Activated CD4-positive, alpha-beta T cell treated with anti-CD3 and anti-CD28 coated beads, Interleukin-2, amount 10 ng/mL, durations not matched to agents 24 days and 14 days (primary cell): ENCODE measurements at regions of chr4 and their contacts with region 1.

Region 1: DNA sequence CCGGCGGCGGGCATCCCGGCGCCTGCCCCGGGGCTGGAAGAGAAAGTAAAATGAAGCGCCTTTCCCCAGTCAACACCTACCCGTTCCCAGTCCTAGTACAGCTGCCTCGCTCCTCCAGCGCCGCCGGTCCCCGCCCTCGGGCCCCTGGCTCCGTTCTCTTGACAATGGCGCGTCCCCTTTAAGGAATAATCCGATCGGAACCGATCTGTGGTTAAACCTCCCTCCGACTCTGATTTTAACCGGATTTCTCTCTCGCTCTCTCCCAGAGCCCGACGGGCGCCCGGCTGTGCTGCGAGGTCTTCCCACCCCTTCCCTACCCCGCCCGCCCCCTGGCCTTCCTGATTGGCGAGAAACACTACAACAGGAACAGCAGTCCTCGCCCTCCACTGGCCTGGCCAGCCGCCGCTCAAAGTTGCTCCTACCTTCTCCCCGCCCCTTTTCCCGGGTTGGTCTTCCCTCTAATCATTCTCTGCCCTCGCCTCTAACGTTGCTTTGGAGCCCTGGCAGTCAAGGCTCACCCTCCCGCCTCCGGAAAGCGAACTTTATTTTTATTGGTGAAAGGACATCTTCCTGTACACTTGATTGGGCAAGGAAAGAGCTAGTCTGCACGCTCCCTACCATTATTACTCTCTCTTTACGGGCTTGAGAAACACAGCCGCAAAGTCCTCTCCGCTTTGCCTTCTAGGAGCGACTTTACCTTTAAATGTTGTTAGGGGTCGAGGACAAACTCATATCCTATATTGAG is at the start of gene FRYL:
- DNase-seq: peak; percentile 99
- H3K4me3 Mint-ChIP-seq: peak within 1 kb of the TSS; percentile 91
- H3K27ac Mint-ChIP-seq: peak within 1 kb of the TSS; percentile 96
- H3K4me1 Mint-ChIP-seq: peaks cover 38% of the 10 kb centered on the region
- H3K27me3 Mint-ChIP-seq: no peaks in the 10 kb centered on the region
- total RNA-seq, gene FRYL: 62.0 and 66.0 TPM in 2 replicates

Region 2: GRCh38 chr4:48340965-48341775 is 439.0 kb before region 1 on chr4 and contains the start of gene SLAIN2:
- intact Hi-C with region 1: loop called (anchors 1 kb)
- DNase-seq: peak; percentile 100
- H3K4me3 Mint-ChIP-seq: peak within 1 kb of the TSS; percentile 100
- H3K27ac Mint-ChIP-seq: peak within 1 kb of the TSS; percentile 98
- H3K4me1 Mint-ChIP-seq: peaks cover 55% of the 10 kb centered on the region
- H3K27me3 Mint-ChIP-seq: no peaks in the 10 kb centered on the region
- total RNA-seq, gene SLAIN2: 77.6 and 80.2 TPM in 2 replicates

Region 3: DNA sequence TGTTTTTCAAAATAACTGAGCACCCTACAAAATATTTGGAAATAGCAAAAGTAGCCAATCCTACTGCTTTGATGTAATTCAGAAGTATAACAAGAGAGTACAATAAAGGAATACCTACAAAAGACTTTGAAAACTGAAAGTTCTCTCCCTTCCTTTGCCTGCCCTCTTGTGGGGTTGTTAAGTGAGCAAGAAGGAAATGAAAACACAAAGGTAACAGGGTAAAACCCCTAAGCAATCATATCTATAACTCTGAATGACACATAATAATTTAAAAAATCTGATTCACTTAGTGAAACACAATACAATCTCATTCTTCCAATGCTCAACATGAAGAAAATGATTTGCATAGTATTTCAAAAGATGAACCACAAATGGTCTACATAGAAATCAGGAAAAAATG is 98.3 kb before region 1 on chr4:
- intact Hi-C with region 1: loop called (anchors 1 kb)
- DNase-seq: peak; percentile 68
- H3K4me3 Mint-ChIP-seq: no peak overlapping the region
- H3K27ac Mint-ChIP-seq: peak overlapping the region; percentile 42
- H3K4me1 Mint-ChIP-seq: peaks cover 24% of the 10 kb centered on the region
- H3K27me3 Mint-ChIP-seq: no peaks in the 10 kb centered on the region

Region 4: DNA sequence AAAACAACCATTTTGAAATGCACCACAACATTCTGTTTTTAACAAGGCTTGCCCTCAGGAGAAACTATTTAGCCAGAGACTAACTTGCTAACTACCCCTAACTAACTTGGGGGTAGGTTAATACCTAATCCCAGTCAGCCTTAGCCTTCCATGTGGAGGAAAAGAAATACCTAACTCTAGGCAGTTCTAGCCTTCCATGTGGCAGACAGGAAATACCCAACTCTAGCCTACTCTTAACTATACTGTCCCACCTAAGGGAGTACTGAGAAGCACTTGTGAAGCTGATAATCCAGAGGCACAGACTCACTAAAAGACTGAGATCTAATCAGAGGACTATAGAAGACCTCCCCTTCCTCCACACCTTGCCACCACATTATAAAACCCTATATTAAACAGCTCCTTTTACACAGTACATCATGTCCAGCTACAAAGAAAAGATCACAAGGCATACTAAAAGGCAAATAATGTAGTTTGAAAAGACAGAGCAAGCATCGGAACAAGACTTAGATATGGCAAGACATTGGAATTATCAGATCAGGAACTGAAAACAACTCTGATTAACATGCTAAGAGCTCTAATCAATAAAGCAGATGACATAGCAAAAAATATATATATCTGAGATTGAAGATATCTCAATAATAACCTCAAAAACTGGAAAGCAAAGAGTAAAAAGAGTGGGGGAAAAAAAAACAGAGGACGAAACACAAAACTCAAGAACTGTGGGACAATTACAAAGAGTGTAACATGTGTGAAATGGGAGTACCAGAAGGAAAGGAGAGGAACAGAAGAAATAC is 52.3 kb before region 1 on chr4:
- intact Hi-C with region 1: loop called (anchors 5 kb)
- DNase-seq: no peak
- H3K4me3 Mint-ChIP-seq: no peak overlapping the region
- H3K27ac Mint-ChIP-seq: no peak overlapping the region
- H3K4me1 Mint-ChIP-seq: peaks cover 68% of the 10 kb centered on the region
- H3K27me3 Mint-ChIP-seq: no peaks in the 10 kb centered on the region

Region 5: DNA sequence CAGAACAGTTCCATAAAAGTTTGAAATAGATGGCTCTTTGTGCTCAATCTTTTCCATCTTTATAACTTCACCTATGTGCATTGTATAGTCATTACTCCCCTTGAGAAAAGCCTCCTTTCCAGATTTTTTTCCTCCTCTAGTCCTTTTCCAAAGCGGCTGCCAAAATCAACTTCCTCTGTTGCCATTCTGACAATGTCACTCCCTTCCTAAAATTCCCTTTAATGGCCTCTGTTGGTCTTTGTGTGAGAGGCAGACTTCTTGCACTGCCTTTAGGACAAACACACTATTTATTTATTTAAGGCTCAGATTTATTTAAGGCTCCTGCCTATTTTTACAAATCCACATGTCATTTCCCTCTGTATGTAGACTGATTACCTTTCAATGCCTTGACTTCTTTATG is 21.6 kb after region 1 on chr4:
- intact Hi-C with region 1: loop called (anchors 2 kb)
- DNase-seq: no peak
- H3K4me3 Mint-ChIP-seq: no peak overlapping the region
- H3K27ac Mint-ChIP-seq: no peak overlapping the region
- H3K4me1 Mint-ChIP-seq: no peaks in the 10 kb centered on the region
- H3K27me3 Mint-ChIP-seq: no peaks in the 10 kb centered on the region

Region 6: DNA sequence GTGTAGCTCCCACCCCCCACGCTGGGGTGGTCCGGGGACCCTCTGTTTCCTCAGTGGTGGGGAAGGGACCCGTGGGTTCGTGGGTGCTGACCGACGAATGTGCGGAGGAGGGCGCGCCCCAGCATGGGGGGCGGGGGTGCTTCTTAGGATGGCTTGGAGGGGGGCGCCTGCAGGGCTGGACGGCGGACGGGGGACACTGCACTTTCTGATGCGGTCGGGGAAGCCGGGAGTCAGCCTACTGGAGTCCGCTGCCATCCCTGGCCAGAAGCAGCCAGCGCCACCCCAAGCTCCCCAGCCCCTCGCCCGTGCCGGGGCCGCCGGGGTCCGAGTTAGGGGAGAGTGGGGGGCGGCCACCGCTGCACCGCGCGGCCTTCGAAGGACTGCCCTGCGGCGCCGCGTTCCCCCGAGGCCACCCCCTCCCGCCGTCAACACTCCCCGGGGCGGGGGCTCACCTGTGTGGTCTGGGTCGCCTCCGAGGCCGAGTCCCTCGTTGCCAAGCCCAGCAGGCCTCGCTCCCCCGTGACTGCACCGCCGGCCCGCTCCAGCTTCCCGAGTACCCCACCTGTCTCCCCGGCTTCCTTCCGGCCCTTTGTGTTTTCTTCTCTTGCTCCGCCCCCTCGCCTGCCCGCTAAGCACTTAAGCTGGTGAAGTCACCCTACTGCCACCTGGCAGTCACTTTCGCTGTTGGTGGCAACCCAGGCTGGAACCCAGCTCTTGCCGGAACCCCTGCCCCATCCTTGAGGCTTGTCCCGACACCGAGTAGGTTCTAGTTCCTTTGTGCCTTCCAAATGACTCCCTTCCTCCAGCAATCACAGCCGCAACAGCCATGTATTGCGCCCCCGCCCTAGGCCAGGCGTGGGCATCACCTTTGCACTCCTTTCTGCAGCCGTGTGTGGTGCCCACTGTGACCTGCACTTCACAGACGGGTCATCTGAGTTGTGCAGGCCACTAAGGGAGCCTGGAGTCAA is 126.3 kb after region 1 on chr4 and contains the start of gene OCIAD2:
- intact Hi-C with region 1: loop called (anchors 1 kb)
- DNase-seq: peak; percentile 93
- H3K4me3 Mint-ChIP-seq: peak within 1 kb of the TSS; percentile 94
- H3K27ac Mint-ChIP-seq: peak within 1 kb of the TSS; percentile 90
- H3K4me1 Mint-ChIP-seq: peaks cover 39% of the 10 kb centered on the region
- H3K27me3 Mint-ChIP-seq: no peaks in the 10 kb centered on the region
- total RNA-seq, gene OCIAD2: 54.1 and 65.3 TPM in 2 replicates